Pancreas (tissue), 10 donors: ENCODE measurements at regions of chr3 and their contacts with region 1.

Region 1: GRCh38 chr3:150495563-150496168 is 50.6 kb downstream of the SERP1 start:
- DNase-seq: no peak
- ATAC-seq: peak in 3 of 4 donors; percentile 76 to 87 (median 84)
- H3K4me3 ChIP-seq: no peak overlapping the region
- H3K27ac ChIP-seq: no peak overlapping the region
- H3K4me1 ChIP-seq: peaks cover 0 to 4% (median 0%) of the 10 kb centered on the region in 3 donors
- H3K27me3 ChIP-seq: no peaks in the 10 kb centered on the region
- CTCF ChIP-seq: peak; percentile 34 to 79 (median 60)

Region 2: DNA sequence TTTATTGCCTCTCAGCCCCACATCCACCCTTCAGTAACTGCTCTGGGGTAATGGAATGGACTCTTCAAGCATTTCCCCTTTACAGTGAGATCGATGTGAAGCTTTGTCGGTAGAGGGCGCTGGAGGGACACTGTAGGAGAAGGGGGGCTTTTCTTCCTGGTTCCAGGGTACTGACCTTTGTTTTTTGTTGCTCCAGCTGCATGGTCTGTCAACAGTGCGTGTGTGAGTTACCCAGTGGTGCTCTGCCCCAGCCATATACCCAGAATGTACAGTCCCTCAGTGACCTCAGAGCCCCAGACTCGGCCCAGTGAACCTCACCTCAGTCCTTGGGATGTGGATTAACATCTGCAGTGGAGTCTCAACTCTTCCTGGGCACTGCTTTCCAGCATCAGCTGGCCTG is 267.8 kb before region 1 on chr3:
- intact Hi-C with region 1: loop called in 1 of 3 experiments (anchors 10 kb)
- DNase-seq: peak in 2 of 6 donors; percentile 21 to 39
- ATAC-seq: peak in 3 of 4 donors; percentile 63 to 74 (median 65)
- H3K4me3 ChIP-seq: no peak overlapping the region
- H3K27ac ChIP-seq: no peak overlapping the region
- H3K4me1 ChIP-seq: no peaks in the 10 kb centered on the region
- H3K27me3 ChIP-seq: no peaks in the 10 kb centered on the region
- CTCF ChIP-seq: peak in 3 of 4 donors; percentile 11 to 42 (median 25)

Region 3: GRCh38 chr3:150286390-150287147 is 209.1 kb before region 1 on chr3:
- intact Hi-C with region 1: loop called in 2 of 3 experiments (anchors 5 to 10 kb)
- DNase-seq: peak in 2 of 6 donors; percentile 14 to 17
- ATAC-seq: peak; percentile 90 to 97 (median 94)
- H3K4me3 ChIP-seq: no peak overlapping the region
- H3K27ac ChIP-seq: no peak overlapping the region
- H3K4me1 ChIP-seq: no peaks in the 10 kb centered on the region
- H3K27me3 ChIP-seq: no peaks in the 10 kb centered on the region
- CTCF ChIP-seq: peak; percentile 32 to 62 (median 44)

Region 4: DNA sequence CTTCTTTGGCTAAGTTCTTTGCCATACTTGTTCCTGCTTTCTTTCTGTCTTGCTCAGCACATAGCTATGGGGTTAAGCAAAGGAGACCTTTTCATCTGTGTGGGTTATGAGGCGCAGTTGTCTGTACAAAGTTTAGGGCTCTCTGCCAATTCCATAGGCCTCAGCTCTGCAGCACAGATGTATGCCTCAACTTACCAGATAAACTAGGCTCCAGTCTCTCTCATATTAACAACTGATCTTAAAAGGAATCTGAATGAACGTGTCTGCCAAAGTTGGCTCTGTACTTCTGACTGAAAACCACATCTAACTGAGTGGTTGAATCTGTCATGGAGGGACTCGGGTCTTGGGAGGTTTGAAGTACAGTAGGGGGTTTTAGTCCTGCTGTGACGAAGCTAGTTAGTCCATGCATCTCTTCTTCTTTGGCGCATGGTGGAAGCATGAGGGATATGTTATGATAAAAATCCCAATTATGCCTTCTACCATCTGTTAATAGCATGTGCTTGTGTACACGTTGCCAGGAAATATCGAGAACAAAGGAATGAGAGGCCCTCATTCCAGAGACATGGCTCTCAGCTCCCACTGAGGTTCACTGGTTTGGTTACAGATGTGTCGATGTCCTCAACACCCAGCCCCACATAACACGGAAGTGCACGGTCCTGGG is 202.1 kb before region 1 on chr3:
- intact Hi-C with region 1: loop called in 2 of 3 experiments (anchors 5 to 10 kb)
- DNase-seq: no peak
- ATAC-seq: no peak
- H3K4me3 ChIP-seq: no peak overlapping the region
- H3K27ac ChIP-seq: no peak overlapping the region
- H3K4me1 ChIP-seq: no peaks in the 10 kb centered on the region
- H3K27me3 ChIP-seq: no peaks in the 10 kb centered on the region
- CTCF ChIP-seq: no peak

Region 5: GRCh38 chr3:150409512-150410310 is 86.0 kb before region 1 on chr3:
- intact Hi-C with region 1: loop called in 1 of 3 experiments (anchors 10 kb)
- DNase-seq: peak; percentile 75 to 93 (median 83)
- ATAC-seq: peak; percentile 56 to 69 (median 62)
- H3K4me3 ChIP-seq: peak overlapping the region; percentile 78 to 95 (median 86)
- H3K27ac ChIP-seq: peak overlapping the region; percentile 98 to 100 (median 100)
- H3K4me1 ChIP-seq: peaks cover 0 to 21% (median 11%) of the 10 kb centered on the region in 3 donors
- H3K27me3 ChIP-seq: no peaks in the 10 kb centered on the region
- CTCF ChIP-seq: peak; percentile 22 to 50 (median 38)